Psoas muscle (tissue), 8 donors: ENCODE measurements at regions of chr1 and their contacts with region 1.

Region 1: DNA sequence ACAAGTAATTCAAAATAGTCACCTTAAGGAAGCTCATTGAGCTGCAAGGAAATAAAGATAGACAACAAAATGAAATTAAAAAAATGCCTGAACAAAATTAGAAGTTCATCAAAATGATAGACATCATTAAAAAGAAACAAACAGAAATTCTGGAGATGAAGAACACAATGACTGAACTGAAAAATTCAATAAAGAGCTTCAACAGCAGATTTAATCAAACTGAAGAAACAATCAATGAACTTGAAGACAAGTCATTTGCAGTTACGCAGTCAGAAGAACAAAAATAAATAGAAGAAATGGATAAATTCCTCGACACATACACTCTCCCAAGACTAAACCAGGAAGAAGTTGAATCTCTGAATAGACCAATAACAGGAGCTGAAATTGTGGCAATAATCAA is 390.0 kb upstream of the SPAG17 start:
- DNase-seq: no peak
- ATAC-seq: no peak
- H3K4me3 ChIP-seq: no peak overlapping the region
- H3K27ac ChIP-seq: no peak overlapping the region
- H3K4me1 ChIP-seq: no peaks in the 10 kb centered on the region
- H3K27me3 ChIP-seq: no peaks in the 10 kb centered on the region
- CTCF ChIP-seq: no peak

Region 2: DNA sequence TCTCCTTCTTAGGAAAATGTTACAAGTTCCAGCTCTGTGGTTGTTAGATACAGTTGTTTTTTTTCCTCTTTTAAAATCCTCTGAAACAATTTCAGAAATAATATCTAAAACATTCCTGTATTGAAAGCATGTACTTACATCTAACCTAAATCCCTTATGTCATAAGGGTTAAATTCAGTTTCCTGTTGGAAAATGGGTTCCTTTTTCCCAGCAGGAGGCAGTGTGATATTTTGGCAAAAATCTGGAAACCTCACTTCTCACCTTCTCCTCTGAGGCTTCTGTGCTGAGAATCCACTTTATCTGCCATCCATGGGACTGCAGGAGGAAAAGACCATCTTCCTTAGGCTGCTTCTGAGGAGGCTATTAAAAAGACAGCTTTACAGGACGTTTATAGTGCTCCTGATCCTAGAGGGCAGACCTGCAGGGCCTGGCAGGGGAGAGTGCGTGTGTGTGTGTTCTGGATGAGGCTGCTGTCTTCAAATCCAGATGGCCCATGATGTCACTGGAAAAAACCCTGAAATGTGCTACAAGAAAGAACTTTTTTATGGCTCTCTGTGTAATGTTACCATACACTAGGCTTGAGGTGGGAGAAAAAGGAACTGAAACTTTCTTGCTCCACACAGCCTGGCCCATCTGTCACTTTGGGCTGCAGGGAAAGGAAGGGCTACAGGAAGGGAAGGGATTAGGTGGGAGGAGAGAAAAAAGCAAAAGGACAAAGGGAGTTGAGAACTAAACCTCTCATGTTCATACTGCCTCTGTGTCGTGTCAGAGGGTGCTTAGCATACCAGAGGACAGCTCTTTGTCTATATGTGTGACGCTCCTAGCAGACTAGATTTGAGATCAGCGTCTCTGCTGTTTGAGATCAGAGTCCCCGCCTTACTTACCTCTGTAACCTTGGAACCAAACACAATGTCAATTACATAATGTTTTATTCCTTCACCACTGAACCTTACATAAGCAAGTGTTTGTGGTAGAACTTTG is 10.8 kb before region 1 on chr1:
- intact Hi-C with region 1: loop called in 1 of 2 experiments (anchors 2 kb)
- DNase-seq: no peak
- ATAC-seq: no peak
- H3K4me3 ChIP-seq: no peak overlapping the region
- H3K27ac ChIP-seq: no peak overlapping the region
- H3K4me1 ChIP-seq: no peaks in the 10 kb centered on the region
- H3K27me3 ChIP-seq: no peaks in the 10 kb centered on the region
- CTCF ChIP-seq: no peak